H1 (cell line): ENCODE measurements at regions of chr1 and their contacts with region 1.

Region 1: GRCh38 chr1:164983023-164983650 is 373.4 kb downstream of the LMX1A start:
- DNase-seq: no peak
- H3K4me3 ChIP-seq: no peak overlapping the region
- H3K27ac ChIP-seq: no peak overlapping the region
- H3K4me1 ChIP-seq: 0 out of 7 replicates have a peak, but pooled peaks cover 0 to 4% (median 0%) of the 10 kb centered on the region in 4 experiments
- H3K27me3 ChIP-seq: peaks cover 6 to 23% (median 10%) of the 10 kb centered on the region in 4 experiments
- CTCF ChIP-seq: peak in 1 of 3 experiments; percentile 1; a peak in 1 of 4 replicates
- EP300 ChIP-seq: no peak
- POLR2A ChIP-seq: no peak
- RAD21 ChIP-seq: no peak

Region 2: DNA sequence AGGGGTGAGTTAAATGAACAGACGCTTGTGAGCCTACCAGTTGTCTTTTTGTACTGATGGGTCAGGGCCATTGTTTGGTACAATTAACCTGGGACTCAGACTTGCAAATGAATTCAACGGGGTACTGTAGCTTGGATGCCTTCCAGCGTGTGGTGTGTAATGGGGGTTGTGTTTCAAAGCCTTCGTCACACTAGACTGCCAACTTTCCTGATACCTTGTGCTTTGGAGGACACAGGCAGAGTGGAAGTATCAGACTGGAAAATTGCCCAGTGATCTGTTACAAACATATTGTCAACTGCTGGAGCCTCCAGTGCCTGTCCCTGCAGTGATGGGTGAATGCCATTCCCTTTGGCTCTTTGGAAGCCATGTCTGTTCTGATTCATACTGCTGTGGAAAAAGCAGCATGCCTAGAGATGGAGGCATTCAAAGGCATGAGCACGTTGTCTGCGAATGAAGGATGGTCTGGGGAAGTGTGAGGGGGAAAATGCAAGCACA is 11.2 kb before region 1 on chr1:
- CTCF ChIA-PET with region 1: interaction called, 15 read pairs
- POLR2A ChIA-PET with region 1: no interaction called
- DNase-seq: no peak
- H3K4me3 ChIP-seq: no peak overlapping the region
- H3K27ac ChIP-seq: no peak overlapping the region
- H3K4me1 ChIP-seq: peaks cover 0 to 5% (median 3%) of the 10 kb centered on the region in 4 experiments; a peak in 2 of 7 replicates
- H3K27me3 ChIP-seq: peaks cover 0 to 2% (median 0%) of the 10 kb centered on the region in 4 experiments; a peak in 1 of 7 replicates
- CTCF ChIP-seq: no peak
- EP300 ChIP-seq: no peak
- POLR2A ChIP-seq: no peak
- RAD21 ChIP-seq: no peak